Activated T-helper 1 cell treated with anti-CD3 and anti-CD28 coated beads, Interleukin-12 subunit alpha, Interleukin-12 subunit beta, Interleukin-2, Interleukin-4 antibody, amounts not matched to agents 30 ng/mL and 10 ng/mL and 1 ng/mL, durations not matched to agents 14 hours and 24 hours and 36 hours (primary cell): ENCODE measurements at regions of chr12 and their contacts with region 1.

Region 1: DNA sequence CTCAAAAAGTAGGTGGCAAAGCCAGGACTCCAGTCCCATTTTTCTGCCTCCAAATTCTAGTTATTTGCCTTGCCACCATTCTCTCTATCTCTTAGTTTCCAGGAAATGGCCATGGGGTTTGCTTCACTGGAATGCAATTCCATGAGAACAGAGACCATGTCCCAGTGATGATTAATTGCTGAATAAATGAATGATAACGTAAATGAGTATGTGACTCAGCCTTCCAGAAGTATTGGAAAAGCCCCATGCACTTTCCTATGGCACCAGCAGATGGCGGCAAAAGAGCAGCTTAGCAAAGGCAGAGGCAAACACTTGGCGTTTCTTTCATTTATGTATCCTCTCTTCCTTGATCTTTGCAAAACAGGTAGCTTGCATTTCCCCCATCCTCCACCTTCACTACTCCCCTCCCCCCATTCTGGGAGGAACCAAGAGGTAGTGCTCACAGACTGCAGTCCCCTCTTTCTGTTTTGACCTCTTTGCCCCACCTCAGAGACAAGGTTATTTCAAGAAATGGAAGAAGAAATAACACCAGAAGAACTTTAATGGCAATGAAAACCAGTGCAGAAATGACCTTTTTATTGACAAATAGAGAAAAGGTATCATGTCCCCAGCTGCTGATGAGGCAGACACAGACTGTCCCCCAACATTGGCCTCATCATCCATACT is 21.3 kb downstream of the TBX3 start:
- DNase-seq: peak; percentile 19
- H3K4me3 Mint-ChIP-seq: no peak overlapping the region
- H3K27ac Mint-ChIP-seq: no peak overlapping the region
- H3K4me1 Mint-ChIP-seq: no peaks in the 10 kb centered on the region
- H3K27me3 Mint-ChIP-seq: peaks cover 39% of the 10 kb centered on the region

Region 2: DNA sequence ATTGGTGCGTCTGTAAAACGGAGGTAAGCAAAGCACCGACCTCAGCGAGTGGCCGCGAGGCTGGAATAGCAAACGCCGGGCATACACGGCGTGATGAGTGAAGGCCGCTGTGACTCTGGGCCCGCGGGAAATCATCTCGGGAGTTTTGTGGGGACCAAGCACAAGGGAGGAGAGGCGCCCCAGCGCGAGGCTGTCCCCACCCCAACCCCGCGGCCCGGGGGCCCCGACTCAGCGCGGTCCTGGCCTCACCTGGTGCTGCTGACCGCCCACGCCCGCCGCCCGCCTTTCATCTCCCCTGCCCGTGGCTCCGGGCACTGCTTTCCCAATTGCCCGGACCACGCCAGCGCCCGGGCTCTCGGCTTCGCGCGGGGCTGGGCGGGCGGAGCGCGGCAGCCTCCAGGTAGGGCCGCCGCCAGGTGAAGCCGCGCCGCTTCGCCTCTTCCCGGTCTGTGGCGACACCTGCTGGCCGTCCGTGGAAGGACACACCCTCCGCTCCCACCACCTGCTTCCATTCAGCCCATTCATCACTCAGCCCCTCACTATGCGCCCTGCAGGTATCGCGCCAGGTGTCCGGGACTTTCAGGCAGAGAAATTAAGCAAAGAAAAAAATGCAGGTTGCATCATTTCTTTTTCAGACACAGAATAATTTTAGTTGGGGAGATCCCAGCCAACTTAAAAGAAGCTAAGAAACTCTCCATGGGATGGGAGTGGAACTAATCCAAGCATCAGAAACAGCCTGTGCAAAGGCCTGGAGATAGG is 1254.4 kb after region 1 on chr12:
- intact Hi-C with region 1: loop called (anchors 1 kb)
- DNase-seq: peak; percentile 51
- H3K4me3 Mint-ChIP-seq: no peak overlapping the region
- H3K27ac Mint-ChIP-seq: no peak overlapping the region
- H3K4me1 Mint-ChIP-seq: peaks cover 4% of the 10 kb centered on the region
- H3K27me3 Mint-ChIP-seq: peaks cover 29% of the 10 kb centered on the region